ENCODE measurements at regions of chr15 and their contacts with region 1.

Region 1: GRCh38 chr15:36501063-36501678 is 78.3 kb upstream of the CDIN1 start:
- DNase-seq: no peak
- H3K4me3 ChIP-seq: no peak overlapping the region
- H3K27ac ChIP-seq: no peak overlapping the region
- H3K4me1 ChIP-seq: peaks cover 4% of the 10 kb centered on the region
- H3K27me3 ChIP-seq: no peaks in the 10 kb centered on the region
- CTCF ChIP-seq: peak in 2 of 3 experiments; percentile 25 to 40
- POLR2A ChIP-seq: no peak

Region 2: GRCh38 chr15:36571301-36571700 is 70.1 kb after region 1 on chr15:
- intact Hi-C with region 1: no loop called
- DNase-seq: no peak
- H3K4me3 ChIP-seq: no peak overlapping the region
- H3K27ac ChIP-seq: no peak overlapping the region
- H3K4me1 ChIP-seq: no peaks in the 10 kb centered on the region
- H3K27me3 ChIP-seq: no peaks in the 10 kb centered on the region
- CTCF ChIP-seq: no peak
- POLR2A ChIP-seq: no peak

Region 3: DNA sequence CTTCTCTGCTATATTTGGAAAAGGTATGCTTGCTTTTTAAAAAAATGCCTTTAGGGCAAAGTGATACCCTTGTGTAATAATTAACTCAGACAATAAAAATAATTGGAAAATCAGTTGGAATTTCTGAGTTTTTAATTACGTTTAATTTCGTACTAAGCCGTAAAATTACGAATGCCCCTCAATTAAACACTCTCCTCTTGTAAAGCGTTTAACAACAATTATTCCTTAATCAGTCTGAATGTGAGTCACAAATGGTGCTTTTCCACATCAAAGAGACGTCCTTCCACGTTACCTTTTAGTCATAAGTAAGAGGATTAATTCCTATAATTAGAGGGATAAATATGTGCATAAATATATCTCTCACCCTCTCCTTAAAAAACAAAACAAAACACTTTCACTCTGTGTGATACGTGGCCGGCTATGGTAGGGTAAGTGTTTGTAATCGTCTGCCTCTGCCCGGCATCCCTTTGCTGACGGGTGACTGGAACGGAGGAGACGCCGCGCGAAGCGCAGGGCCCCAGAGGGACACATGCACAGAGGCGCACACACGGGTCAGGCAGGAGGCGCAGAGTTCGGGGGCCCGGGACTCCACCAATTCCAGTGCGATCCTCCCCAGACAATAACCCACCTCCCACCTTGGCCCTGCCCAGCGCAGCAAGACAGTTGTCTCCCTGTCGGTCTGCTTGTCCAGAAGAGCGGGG is 608.9 kb after region 1 on chr15:
- intact Hi-C with region 1: loop called (anchors 5 kb)
- DNase-seq: no peak
- H3K4me3 ChIP-seq: peak overlapping the region; percentile 40 to 51
- H3K27ac ChIP-seq: peak overlapping the region; percentile 62
- H3K4me1 ChIP-seq: peaks cover 10% of the 10 kb centered on the region
- H3K27me3 ChIP-seq: no peaks in the 10 kb centered on the region
- CTCF ChIP-seq: no peak
- POLR2A ChIP-seq: no peak

Measured in vagina (tissue), 2 donors.